ENCODE measurements at regions of chr5 and their contacts with region 1.

Region 1: GRCh38 chr5:108260117-108260857 is 121.6 kb downstream of the FBXL17 start:
- DNase-seq: peak; percentile 35 to 70 (median 42)
- H3K4me3 ChIP-seq: no peak overlapping the region
- H3K4me3 Mint-ChIP-seq: no peak overlapping the region
- H3K27ac ChIP-seq: no peak overlapping the region
- H3K27ac Mint-ChIP-seq: no peak overlapping the region
- H3K4me1 ChIP-seq: no peaks in the 10 kb centered on the region
- H3K4me1 Mint-ChIP-seq: peaks cover 4 to 15% (median 13%) of the 10 kb centered on the region in 3 donors
- H3K27me3 ChIP-seq: no peaks in the 10 kb centered on the region
- H3K27me3 Mint-ChIP-seq: no peaks in the 10 kb centered on the region

Region 2: DNA sequence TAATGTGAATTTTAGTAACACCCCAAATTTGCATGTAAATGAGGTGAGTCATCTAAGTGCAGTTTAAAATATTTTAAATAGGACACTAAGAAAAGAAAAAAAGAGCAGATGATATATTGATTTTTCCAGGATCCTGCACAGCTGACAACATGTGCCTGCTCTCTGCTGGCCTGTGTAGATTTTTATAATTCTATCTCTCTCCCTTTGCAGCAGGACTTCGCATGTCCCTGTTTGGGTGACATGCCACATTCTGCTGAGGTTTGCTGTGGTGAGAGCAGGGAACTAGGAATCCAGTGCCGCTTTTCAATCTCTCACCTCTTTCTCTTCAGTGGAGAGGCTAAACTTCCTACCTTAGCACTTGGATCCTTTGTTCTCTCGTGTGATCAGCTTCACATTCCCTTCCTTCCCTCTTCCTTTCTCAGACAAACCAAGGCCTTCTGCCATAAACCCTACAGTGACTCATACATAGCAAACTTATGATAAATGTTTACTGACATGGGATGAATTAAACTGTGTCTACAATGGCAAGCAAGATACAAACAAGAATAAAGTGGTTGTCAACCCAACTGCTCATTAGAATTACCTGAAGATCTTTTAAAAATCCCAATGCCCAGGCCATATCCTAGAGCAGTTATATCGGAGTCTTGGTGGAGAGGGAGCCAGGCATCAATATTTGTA is 390.7 kb before region 1 on chr5:
- CTCF ChIA-PET with region 1: no interaction called
- POLR2A ChIA-PET with region 1: no interaction called
- DNase-seq: no peak
- H3K4me3 ChIP-seq: no peak overlapping the region
- H3K4me3 Mint-ChIP-seq: no peak overlapping the region
- H3K27ac ChIP-seq: no peak overlapping the region
- H3K27ac Mint-ChIP-seq: peak overlapping the region in 1 of 8 donors; percentile 87
- H3K4me1 ChIP-seq: no peaks in the 10 kb centered on the region
- H3K4me1 Mint-ChIP-seq: no peaks in the 10 kb centered on the region
- H3K27me3 ChIP-seq: no peaks in the 10 kb centered on the region
- H3K27me3 Mint-ChIP-seq: no peaks in the 10 kb centered on the region

Region 3: DNA sequence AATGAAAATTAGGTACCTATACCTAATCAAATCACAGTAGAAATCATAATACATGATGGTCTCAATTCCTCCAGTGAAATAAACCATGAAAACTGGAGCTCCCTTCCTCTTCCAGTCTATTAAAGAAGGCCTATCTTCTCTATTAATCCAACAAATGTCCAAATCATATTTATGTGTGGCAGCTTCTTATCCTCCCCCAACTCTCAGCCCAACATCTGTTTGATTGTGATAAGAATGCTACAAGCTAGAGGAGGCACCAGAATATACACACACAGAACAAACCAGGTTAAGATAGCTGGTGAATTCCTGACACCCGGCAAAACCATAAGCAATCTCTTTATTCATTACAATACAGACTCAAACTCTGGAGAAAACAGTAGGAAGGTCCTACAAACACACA is 10.8 kb after region 1 on chr5:
- CTCF ChIA-PET with region 1: interaction called, 15 read pairs
- POLR2A ChIA-PET with region 1: no interaction called
- DNase-seq: no peak
- H3K4me3 ChIP-seq: no peak overlapping the region
- H3K4me3 Mint-ChIP-seq: peak overlapping the region in 1 of 7 donors; percentile 64
- H3K27ac ChIP-seq: no peak overlapping the region
- H3K27ac Mint-ChIP-seq: peak overlapping the region in 1 of 8 donors; percentile 39
- H3K4me1 ChIP-seq: no peaks in the 10 kb centered on the region
- H3K4me1 Mint-ChIP-seq: peaks cover 3 to 21% (median 17%) of the 10 kb centered on the region in 3 donors
- H3K27me3 ChIP-seq: no peaks in the 10 kb centered on the region
- H3K27me3 Mint-ChIP-seq: no peaks in the 10 kb centered on the region

Region 4: DNA sequence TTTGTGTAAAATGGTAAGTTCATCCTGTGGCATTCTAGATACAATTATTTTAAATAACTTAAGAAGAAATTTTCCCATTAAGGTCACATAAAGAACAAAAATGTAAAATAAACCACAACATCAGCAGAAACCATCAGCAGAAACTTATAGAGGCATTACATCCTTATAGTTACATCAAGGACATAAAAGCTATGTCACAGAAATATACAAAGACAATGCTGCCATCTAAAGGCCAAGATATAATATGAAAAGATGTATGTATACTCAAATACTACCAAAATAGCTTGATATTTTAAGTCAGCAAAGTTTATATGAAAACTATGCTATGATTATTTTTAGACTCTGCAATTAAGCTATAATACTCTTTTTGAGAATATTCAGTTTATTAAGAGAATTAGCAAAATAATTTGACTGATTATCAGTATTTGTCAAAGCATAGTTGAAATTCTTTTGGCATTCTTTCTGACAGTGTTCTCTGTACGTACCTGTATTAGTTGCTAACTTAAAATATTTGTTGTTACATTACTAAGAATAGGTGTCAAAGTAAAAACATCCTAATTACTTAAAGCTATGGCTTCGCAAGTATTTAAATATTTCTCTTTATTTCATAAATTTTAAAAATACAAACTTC is 85.4 kb after region 1 on chr5:
- CTCF ChIA-PET with region 1: interaction called, 23 read pairs
- POLR2A ChIA-PET with region 1: no interaction called
- DNase-seq: peak in 2 of 5 donors; percentile 21 to 35
- H3K4me3 ChIP-seq: no peak overlapping the region
- H3K4me3 Mint-ChIP-seq: no peak overlapping the region
- H3K27ac ChIP-seq: no peak overlapping the region
- H3K27ac Mint-ChIP-seq: no peak overlapping the region
- H3K4me1 ChIP-seq: no peaks in the 10 kb centered on the region
- H3K4me1 Mint-ChIP-seq: no peaks in the 10 kb centered on the region
- H3K27me3 ChIP-seq: no peaks in the 10 kb centered on the region
- H3K27me3 Mint-ChIP-seq: no peaks in the 10 kb centered on the region

Measured in CD8-positive, alpha-beta memory T cell (primary cell).